ENCODE measurements at regions of chr12 and their contacts with region 1.

Region 1: DNA sequence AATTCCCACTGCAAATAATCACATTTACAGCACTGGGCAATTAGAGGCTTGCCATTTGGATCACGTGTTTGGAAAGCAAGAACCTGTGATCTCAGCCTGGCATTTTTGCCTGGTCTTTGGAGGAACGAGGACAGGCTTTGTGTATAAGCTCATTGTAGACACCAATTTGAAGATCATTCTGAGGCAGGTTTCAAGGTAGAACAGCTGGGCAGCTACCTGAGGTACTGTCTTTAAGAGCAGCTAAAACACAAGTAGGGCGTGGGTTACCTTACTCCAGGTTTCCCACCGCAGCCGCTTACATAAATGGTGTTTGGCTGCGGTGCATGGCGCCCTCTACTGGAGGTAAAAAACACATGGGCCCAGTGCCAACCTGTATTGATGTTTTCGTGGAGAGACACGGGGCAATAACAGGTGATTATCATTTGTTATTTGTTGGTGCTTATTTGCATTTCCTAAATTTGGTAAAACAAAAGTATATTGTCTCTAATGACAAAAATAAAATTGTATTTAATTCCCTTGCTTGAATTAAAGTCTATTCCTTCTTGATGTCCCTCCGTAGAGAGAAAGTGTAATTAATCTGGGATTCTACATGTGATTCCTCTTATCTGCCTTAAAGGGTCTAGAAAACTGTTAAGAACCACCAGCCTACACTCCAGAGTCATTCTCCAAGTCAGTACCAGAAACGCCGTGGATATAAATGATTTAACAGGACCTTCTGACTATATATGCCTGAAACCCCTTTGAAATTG is 69.7 kb downstream of the SVOP start:
- DNase-seq: peak; percentile 50 to 75 (median 67)
- ATAC-seq: peak; percentile 34 to 73 (median 68)
- H3K4me3 ChIP-seq: peak overlapping the region in 2 of 12 donors; percentile 9 to 21
- H3K27ac ChIP-seq: peak overlapping the region in 1 of 12 donors; percentile 36
- H3K4me1 ChIP-seq: peaks cover 0 to 18% (median 7%) of the 10 kb centered on the region in 12 donors
- H3K27me3 ChIP-seq: no peaks in the 10 kb centered on the region
- CTCF ChIP-seq: peak; percentile 75 to 97 (median 88)
- POLR2A ChIP-seq: no peak

Region 2: DNA sequence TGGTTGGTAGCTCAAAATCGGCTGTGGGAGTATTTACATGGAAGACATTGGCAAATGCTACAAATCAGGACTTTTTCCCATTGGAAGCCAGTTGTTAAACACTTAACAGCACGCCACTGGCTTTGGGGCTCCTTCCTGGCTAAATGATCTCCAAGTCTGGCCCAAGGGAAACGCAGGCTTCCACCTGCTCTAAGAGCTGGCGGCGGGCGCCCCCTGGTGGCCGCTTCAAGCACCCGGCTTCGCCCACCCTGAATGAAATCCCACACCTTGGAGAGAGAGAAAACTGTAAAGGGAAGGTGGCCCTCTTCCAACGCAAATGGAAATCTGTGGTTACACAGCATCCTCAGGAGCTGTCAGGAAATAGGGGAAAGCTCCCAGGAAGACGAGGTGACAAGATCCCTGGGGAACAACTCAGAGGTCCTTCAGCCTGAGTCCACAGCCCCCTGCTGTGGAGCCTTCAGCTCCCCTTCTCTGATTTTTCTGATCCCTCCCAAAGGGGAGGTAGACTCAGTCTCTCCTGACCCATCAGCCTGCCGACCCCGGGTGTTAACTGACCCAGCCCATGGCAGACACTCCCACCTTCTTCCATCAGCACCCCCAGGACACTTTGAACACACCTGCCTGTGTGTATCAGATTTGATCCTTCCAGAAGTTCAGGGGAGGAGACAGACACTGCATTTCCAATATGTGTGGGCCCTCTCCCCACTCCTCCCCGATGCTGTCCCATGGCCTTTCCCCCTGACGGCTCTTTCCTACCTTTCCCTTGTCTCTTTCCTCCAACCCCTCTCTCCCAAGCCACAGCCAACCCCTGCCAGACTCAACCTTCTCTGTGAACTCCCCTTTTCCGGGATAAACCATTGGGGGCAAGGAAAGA is 332.8 kb before region 1 on chr12:
- intact Hi-C with region 1: loop called in 3 of 10 experiments (anchors 2 to 5 kb)
- DNase-seq: peak; percentile 74 to 89 (median 80)
- ATAC-seq: peak; percentile 72 to 90 (median 80)
- H3K4me3 ChIP-seq: no peak overlapping the region
- H3K27ac ChIP-seq: peak overlapping the region in 1 of 12 donors; percentile 53
- H3K4me1 ChIP-seq: peaks cover 0 to 67% (median 13%) of the 10 kb centered on the region in 12 donors
- H3K27me3 ChIP-seq: no peaks in the 10 kb centered on the region
- CTCF ChIP-seq: peak; percentile 91 to 100 (median 98)
- POLR2A ChIP-seq: no peak

Region 3: GRCh38 chr12:108803428-108804105 is 147.6 kb before region 1 on chr12:
- intact Hi-C with region 1: loop called in 7 of 10 experiments (anchors 5 kb)
- DNase-seq: peak in 4 of 5 donors; percentile 78 to 82 (median 81)
- ATAC-seq: peak; percentile 69 to 79 (median 72)
- H3K4me3 ChIP-seq: peak overlapping the region in 4 of 12 donors; percentile 39 to 48 (median 40)
- H3K27ac ChIP-seq: peak overlapping the region; percentile 65 to 96 (median 88)
- H3K4me1 ChIP-seq: peaks cover 10 to 88% (median 59%) of the 10 kb centered on the region in 12 donors
- H3K27me3 ChIP-seq: no peaks in the 10 kb centered on the region
- CTCF ChIP-seq: peak; percentile 87 to 99 (median 97)
- POLR2A ChIP-seq: no peak

Region 4: GRCh38 chr12:108856428-108857157 is 94.6 kb before region 1 on chr12:
- intact Hi-C with region 1: loop called in 3 of 10 experiments (anchors 5 to 10 kb)
- DNase-seq: peak; percentile 80 to 93 (median 86)
- ATAC-seq: peak; percentile 41 to 63 (median 60)
- H3K4me3 ChIP-seq: peak overlapping the region; percentile 62 to 98 (median 88)
- H3K27ac ChIP-seq: peak overlapping the region; percentile 86 to 99 (median 96)
- H3K4me1 ChIP-seq: peaks cover 12 to 82% (median 57%) of the 10 kb centered on the region in 12 donors
- H3K27me3 ChIP-seq: no peaks in the 10 kb centered on the region
- CTCF ChIP-seq: no peak
- POLR2A ChIP-seq: peak in 1 of 2 donors; percentile 44

Region 5: GRCh38 chr12:108884116-108885012 is 66.8 kb before region 1 on chr12:
- intact Hi-C with region 1: loop called in 2 of 10 experiments (anchors 5 to 10 kb)
- DNase-seq: peak; percentile 31 to 70 (median 58)
- ATAC-seq: peak in 3 of 4 donors; percentile 29 to 76 (median 63)
- H3K4me3 ChIP-seq: no peak overlapping the region
- H3K27ac ChIP-seq: no peak overlapping the region
- H3K4me1 ChIP-seq: peaks cover 0 to 13% (median 0%) of the 10 kb centered on the region in 12 donors
- H3K27me3 ChIP-seq: no peaks in the 10 kb centered on the region
- CTCF ChIP-seq: peak; percentile 28 to 64 (median 50)
- POLR2A ChIP-seq: no peak

Region 6: GRCh38 chr12:109093022-109093918 is 142.1 kb after region 1 on chr12 and contains the start of gene ALKBH2:
- intact Hi-C with region 1: loop called in 2 of 10 experiments (anchors 5 to 10 kb)
- DNase-seq: peak; percentile 92 to 96 (median 95)
- ATAC-seq: peak; percentile 57 to 78 (median 78)
- H3K4me3 ChIP-seq: peak within 1 kb of the TSS; percentile 4 to 69 (median 58)
- H3K27ac ChIP-seq: peak within 1 kb of the TSS in 11 of 12 donors; percentile 2 to 82 (median 53)
- H3K4me1 ChIP-seq: peaks cover 0 to 31% (median 24%) of the 10 kb centered on the region in 12 donors
- H3K27me3 ChIP-seq: no peaks in the 10 kb centered on the region
- CTCF ChIP-seq: peak; percentile 97 to 100 (median 99)
- POLR2A ChIP-seq: peak in 1 of 2 donors; percentile 37
- total RNA-seq, gene ALKBH2: 5.1 to 9.4 (median 7.1) TPM